ENCODE measurements at regions of chr6 and their contacts with region 1.

Region 1: DNA sequence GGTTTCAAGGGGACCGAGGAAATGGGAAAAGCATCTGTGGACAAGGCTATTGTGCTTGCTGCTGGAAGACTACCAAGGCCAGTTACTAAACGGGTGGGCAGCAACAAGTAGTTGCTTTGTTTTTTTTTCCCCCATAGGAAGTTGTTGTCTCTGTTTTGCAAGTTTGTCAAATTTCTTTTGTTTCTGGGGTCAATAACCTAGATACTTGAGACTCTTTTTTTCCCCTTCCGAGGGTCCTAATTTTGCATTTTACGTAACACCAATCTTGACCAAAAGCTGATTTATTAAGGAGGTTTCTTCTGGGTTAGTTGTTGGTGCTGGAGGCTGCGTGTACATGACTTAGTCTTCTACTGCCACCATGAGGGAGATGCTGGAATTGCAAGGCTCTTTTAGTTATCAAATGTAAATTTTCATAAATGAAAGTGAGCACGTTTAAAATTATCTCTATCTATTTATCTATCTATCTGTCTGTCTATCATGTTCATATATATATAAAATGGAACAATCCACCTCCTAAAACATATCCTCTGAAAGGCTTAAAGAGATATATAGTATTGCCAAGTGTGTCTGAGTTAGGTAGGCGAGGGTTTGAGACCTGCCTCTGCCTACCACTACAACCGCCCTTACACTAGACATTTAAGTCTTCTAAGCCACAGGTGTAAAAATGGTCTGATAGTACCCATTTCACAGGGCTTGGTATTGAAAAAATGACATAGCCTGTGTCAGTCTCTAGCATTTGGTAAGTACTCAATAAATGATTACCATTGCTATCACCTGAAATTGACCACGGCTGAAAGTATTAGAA is 60.2 kb downstream of the GCLC start:
- DNase-seq: peak; percentile 91
- ATAC-seq: peak; percentile 91

Region 2: GRCh38 chr6:53171605-53172446 is 312.9 kb before region 1 on chr6:
- intact Hi-C with region 1: loop called (anchors 2 kb)
- DNase-seq: peak; percentile 95
- ATAC-seq: peak; percentile 92

Measured in sciatic nerve (tissue), 2 donors.